ENCODE measurements at regions of chrX and their contacts with region 1.

Region 1: DNA sequence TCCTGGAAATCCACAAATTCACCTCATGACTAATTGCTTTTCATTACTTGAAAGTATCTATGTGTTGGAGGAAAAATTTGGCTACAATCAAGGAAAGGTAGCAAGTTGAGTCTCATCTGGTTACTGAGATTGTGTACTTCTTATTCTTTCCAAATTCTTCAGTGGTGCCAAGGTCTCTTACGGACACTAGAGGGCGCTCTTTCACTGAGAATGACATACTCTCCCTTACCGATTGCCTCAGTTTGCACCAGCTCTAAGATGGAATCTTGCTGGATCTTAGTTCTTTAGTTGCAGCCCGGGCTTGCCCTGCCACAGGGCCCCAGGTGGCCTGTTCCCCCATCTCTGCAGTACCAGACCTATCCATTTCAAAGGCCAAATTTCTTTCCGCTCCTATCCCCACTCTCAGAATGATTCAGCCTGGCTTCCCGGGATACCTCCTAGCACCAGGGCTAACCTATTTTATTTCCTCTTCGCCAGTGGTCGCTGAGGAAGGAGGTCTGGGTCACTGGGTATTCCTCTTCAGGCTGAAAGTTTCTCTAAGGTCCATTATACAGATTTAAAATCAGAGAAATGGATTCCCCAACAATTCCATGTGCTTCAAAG is 24.6 kb upstream of the GPR50 start:
- DNase-seq: peak; percentile 13
- H3K4me3 ChIP-seq: no peak overlapping the region
- H3K27ac ChIP-seq: no peak overlapping the region
- H3K4me1 ChIP-seq: no peaks in the 10 kb centered on the region
- H3K27me3 ChIP-seq: no peaks in the 10 kb centered on the region
- CTCF ChIP-seq: peak; percentile 49 to 72 (median 61)
- EP300 ChIP-seq: no peak
- POLR2A ChIP-seq: no peak

Region 2: DNA sequence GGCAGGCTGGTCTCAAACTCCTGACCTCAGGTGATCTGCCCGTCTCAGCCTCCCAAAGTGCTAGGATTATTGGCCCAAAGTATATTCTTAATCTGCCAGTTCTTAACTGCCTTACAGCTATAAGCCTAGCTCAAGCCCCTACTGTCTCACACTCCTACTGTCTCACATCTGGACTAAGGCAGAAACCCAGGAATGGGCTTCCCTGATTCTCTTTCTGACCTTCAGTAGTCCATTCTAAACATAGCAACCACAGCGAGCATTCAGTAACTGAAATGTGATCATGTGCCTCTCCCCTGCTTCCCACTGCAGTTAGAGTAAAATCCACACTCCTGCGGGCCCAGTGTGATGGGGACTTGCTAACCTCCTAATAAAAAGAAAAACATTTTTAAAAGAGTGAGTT is 399.6 kb before region 1 on chrX:
- in situ Hi-C with region 1: no loop called
- intact Hi-C with region 1: no loop called
- DNase-seq: no peak
- H3K4me3 ChIP-seq: no peak overlapping the region
- H3K27ac ChIP-seq: no peak overlapping the region
- H3K4me1 ChIP-seq: no peaks in the 10 kb centered on the region
- H3K27me3 ChIP-seq: no peaks in the 10 kb centered on the region
- CTCF ChIP-seq: no peak
- EP300 ChIP-seq: no peak
- POLR2A ChIP-seq: no peak

Region 3: DNA sequence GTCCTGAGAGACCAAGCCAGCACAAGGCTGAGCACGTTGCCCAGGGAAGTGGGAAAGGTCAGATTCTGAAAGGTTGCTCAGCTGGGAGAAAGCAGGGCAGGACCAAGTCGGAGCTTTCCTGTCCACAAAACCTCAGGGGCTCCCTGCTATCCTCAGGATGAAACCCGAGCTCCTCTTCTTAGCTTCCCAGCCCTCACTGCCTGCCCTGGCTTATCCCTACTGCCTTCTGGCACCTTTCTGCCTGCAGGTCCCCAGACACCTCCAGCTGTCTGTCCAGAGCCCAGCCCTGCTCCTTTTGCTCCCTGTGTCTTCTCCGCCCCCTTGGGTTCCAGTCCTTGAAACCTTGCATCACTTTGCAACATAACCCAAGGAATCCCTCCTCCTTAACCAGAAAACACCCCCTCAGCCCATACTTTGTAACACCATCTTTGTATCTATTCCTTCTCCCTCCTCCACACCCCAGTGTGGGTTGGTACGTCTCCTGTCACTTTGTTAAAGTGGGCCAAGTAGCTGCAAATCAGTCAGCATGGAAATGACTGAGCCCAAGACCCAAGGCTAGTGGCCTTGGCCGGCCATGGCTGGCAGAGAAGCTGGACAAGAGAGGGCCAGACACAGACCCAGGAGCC is 523.5 kb after region 1 on chrX:
- in situ Hi-C with region 1: loop called (anchors 5 to 25 kb)
- intact Hi-C with region 1: loop called (anchors 5 kb)
- DNase-seq: no peak
- H3K4me3 ChIP-seq: no peak overlapping the region
- H3K27ac ChIP-seq: no peak overlapping the region
- H3K4me1 ChIP-seq: no peaks in the 10 kb centered on the region
- H3K27me3 ChIP-seq: no peaks in the 10 kb centered on the region
- CTCF ChIP-seq: no peak
- EP300 ChIP-seq: no peak
- POLR2A ChIP-seq: no peak

Measured in transverse colon (tissue), 4 donors.